K562 (cell line): ENCODE measurements at regions of chr5 and their contacts with region 1.

Region 1: GRCh38 chr5:136466041-136466415 is 100.7 kb upstream of the TRPC7 start:
- DNase-seq: no peak
- ATAC-seq: no peak
- H3K4me3 ChIP-seq: peak overlapping the region; percentile 52; the same call in 1 of the 2 replicates
- H3K27ac ChIP-seq: peak overlapping the region; percentile 65
- H3K4me1 ChIP-seq: peaks cover 0 to 5% of the 10 kb centered on the region in 2 experiments; a peak in 2 of 5 replicates
- H3K27me3 ChIP-seq: no peaks in the 10 kb centered on the region
- CTCF ChIP-seq: no peak
- EP300 ChIP-seq: no peak
- POLR2A ChIP-seq: no peak
- RAD21 ChIP-seq: no peak

Region 2: GRCh38 chr5:135993880-135994636 is 472.0 kb before region 1 on chr5:
- CTCF ChIA-PET with region 1: no interaction called
- POLR2A ChIA-PET with region 1: no interaction called
- in situ Hi-C with region 1: no loop called
- intact Hi-C with region 1: no loop called
- DNase-seq: no peak
- ATAC-seq: no peak
- H3K4me3 ChIP-seq: no peak overlapping the region
- H3K27ac ChIP-seq: no peak overlapping the region
- H3K4me1 ChIP-seq: peaks cover 0 to 5% of the 10 kb centered on the region in 2 experiments; a peak in 1 of 5 replicates
- H3K27me3 ChIP-seq: peaks cover 9 to 40% of the 10 kb centered on the region in 2 experiments
- CTCF ChIP-seq: no peak
- EP300 ChIP-seq: no peak
- POLR2A ChIP-seq: no peak
- RAD21 ChIP-seq: no peak

Region 3: GRCh38 chr5:136522217-136522956 is 56.4 kb after region 1 on chr5:
- CTCF ChIA-PET with region 1: no interaction called
- POLR2A ChIA-PET with region 1: no interaction called
- in situ Hi-C with region 1: no loop called
- intact Hi-C with region 1: loop called (anchors 2 kb)
- DNase-seq: peak in 1 of 4 experiments; percentile 14
- ATAC-seq: peak; percentile 56
- H3K4me3 ChIP-seq: no peak overlapping the region
- H3K27ac ChIP-seq: no peak overlapping the region
- H3K4me1 ChIP-seq: peaks cover 0 to 8% of the 10 kb centered on the region in 2 experiments; a peak in 2 of 5 replicates
- H3K27me3 ChIP-seq: no peaks in the 10 kb centered on the region
- CTCF ChIP-seq: no peak
- EP300 ChIP-seq: no peak
- POLR2A ChIP-seq: no peak
- RAD21 ChIP-seq: no peak